ENCODE measurements at regions of chr6 and their contacts with region 1.

Region 1: DNA sequence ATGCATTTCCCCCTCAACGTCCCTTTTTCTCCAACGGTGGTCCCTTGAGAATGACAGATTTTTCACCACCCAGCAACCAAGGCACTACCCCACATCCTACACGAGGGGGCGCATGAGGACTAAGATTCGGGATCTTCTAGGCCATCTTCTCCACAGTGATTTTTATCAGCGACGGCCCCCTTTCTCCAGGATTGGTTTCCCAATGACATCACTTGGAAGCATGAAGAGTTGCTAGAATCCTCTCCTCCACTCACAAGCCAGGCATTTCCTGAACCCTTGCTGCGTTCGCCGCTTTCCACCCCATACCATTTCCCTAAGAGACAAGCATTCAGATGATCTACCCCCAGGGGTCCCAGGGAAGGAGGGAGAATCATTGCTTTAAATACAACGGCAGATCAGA is 252.0 kb downstream of the HIVEP2 start:
- DNase-seq: no peak
- H3K4me3 ChIP-seq: no peak overlapping the region
- H3K27ac ChIP-seq: peak overlapping the region in 2 of 4 donors; percentile 16 to 27
- H3K4me1 ChIP-seq: peaks cover 0 to 34% (median 8%) of the 10 kb centered on the region in 3 donors
- H3K27me3 ChIP-seq: no peaks in the 10 kb centered on the region
- CTCF ChIP-seq: peak; percentile 90 to 96 (median 93)
- POLR2A ChIP-seq: no peak

Region 2: GRCh38 chr6:143026696-143027449 is 333.9 kb after region 1 on chr6:
- intact Hi-C with region 1: loop called (anchors 10 kb)
- DNase-seq: no peak
- H3K4me3 ChIP-seq: no peak overlapping the region
- H3K27ac ChIP-seq: no peak overlapping the region
- H3K4me1 ChIP-seq: no peaks in the 10 kb centered on the region
- H3K27me3 ChIP-seq: no peaks in the 10 kb centered on the region
- CTCF ChIP-seq: peak; percentile 18 to 62 (median 56)
- POLR2A ChIP-seq: no peak

Region 3: DNA sequence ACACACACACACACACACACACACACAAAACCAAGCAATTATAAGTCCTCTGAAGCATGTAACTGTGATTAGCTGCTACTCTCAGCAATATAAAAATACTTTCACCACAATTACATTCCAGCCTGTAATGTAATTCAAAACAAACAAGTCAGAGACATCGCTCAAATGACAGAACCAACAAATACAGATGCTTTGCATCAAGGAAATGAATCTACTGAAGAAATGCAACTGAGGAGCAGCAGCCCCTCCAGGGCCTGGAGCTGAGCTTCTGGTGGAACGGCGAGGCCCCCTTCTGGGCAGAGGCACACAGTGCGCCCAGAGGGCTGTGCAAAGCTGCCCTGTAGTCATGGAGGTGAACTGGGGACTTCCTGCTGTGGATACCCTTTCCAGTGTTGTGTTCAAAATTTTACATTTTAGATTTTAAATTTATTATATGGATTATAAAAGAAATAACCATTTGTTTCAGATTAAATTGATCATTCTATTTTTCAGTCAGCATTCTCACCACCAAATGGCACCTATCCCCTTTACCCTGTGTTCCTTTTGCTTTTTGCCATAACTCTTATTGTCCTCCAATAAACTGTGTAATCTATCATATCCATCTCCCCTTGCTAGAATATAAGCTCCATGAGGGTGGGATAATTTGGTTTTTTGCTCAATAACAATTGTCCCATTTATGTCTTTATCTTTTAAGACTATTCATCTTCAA is 734.3 kb after region 1 on chr6:
- intact Hi-C with region 1: loop called (anchors 10 kb)
- DNase-seq: peak; percentile 1
- H3K4me3 ChIP-seq: no peak overlapping the region
- H3K27ac ChIP-seq: no peak overlapping the region
- H3K4me1 ChIP-seq: no peaks in the 10 kb centered on the region
- H3K27me3 ChIP-seq: no peaks in the 10 kb centered on the region
- CTCF ChIP-seq: peak; percentile 57 to 93 (median 86)
- POLR2A ChIP-seq: no peak

Measured in esophagus squamous epithelium (tissue), 5 donors.